Mammary epithelial cell (primary cell): ENCODE measurements at regions of chr19 and their contacts with region 1.

Region 1: DNA sequence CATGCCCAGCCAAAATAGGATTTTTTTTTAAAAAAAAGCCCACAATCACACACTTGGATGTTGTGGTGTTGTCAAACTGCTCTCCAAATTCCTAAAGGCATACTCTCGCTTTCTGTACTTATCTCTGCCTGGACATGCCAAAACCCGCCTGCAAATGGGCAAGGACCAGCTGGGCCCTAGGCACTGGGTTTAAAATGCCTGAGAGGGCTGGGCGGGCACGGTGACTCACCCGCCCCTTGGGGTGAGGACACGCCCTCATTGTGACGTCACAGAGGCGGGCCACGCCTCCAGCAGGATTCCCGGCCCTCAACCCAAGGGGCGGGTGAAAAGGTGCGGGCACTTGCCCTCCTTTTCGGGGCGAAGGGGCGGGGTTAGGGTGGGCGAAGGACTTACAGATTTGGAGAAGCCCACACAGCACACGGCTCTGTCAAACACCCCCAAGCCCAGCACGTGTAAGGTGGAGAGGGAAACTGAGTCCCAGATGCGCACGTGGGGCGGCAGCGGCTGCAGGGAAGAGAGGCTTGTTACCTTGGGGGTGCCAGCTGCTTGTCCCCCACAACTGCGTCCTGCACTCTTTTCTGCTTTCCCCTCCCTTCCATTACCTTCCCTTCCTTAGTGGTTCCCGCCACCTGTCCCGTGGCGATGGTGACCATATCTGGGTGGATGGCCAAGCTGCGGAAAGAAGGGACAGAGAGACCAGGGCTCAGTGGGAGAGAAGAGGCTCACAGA is 6.6 kb downstream of the EML2 start:
- DNase-seq: peak; percentile 98
- H3K4me3 ChIP-seq: no peak overlapping the region
- H3K27ac ChIP-seq: peak overlapping the region; percentile 97
- H3K4me1 ChIP-seq: peaks cover 28% of the 10 kb centered on the region
- H3K27me3 ChIP-seq: no peaks in the 10 kb centered on the region
- CTCF ChIP-seq: no peak

Region 2: GRCh38 chr19:45615795-45616708 is 16.6 kb before region 1 on chr19:
- CTCF ChIA-PET with region 1: no interaction called
- dilution Hi-C with region 1: no loop called
- in situ Hi-C with region 1: no loop called
- intact Hi-C with region 1: loop called (anchors 1 kb)
- DNase-seq: peak; percentile 71
- H3K4me3 ChIP-seq: no peak overlapping the region
- H3K27ac ChIP-seq: peak overlapping the region; percentile 49
- H3K4me1 ChIP-seq: peaks cover 20% of the 10 kb centered on the region
- H3K27me3 ChIP-seq: no peaks in the 10 kb centered on the region
- CTCF ChIP-seq: no peak

Region 3: DNA sequence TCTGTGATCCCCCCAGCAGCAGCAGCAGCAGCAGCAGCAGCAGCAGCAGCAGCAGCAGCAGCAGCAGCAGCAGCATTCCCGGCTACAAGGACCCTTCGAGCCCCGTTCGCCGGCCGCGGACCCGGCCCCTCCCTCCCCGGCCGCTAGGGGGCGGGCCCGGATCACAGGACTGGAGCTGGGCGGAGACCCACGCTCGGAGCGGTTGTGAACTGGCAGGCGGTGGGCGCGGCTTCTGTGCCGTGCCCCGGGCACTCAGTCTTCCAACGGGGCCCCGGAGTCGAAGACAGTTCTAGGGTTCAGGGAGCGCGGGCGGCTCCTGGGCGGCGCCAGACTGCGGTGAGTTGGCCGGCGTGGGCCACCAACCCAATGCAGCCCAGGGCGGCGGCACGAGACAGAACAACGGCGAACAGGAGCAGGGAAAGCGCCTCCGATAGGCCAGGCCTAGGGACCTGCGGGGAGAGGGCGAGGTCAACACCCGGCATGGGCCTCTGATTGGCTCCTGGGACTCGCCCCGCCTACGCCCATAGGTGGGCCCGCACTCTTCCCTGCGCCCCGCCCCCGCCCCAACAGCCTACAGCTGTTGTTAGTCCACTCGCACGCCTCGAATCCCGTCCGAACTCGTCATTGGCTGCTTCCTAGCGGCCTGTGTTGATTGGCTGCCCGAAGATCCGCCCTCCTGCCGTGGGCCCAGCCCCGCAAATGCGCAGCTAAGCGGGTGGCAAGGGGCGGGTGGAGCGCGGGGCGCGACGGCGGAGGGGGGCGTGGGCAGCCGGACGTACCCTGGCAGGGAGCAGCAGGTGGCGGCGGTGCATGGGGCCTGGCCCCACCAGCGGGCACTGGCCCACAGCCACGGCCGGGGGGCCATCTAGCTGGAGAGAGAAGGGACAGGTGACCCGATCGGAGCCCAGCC is 137.8 kb after region 1 on chr19:
- CTCF ChIA-PET with region 1: no interaction called
- dilution Hi-C with region 1: no loop called
- in situ Hi-C with region 1: no loop called
- intact Hi-C with region 1: no loop called
- DNase-seq: peak; percentile 98
- H3K4me3 ChIP-seq: peak overlapping the region; percentile 50 to 83 (median 75)
- H3K27ac ChIP-seq: no peak overlapping the region
- H3K4me1 ChIP-seq: peaks cover 33% of the 10 kb centered on the region
- H3K27me3 ChIP-seq: no peaks in the 10 kb centered on the region
- CTCF ChIP-seq: peak; percentile 44 to 93